ENCODE measurements at regions of chr11 and their contacts with region 1.

Region 1: GRCh38 chr11:14907411-14908213 is 15.6 kb upstream of the CYP2R1 start:
- DNase-seq: peak; percentile 72 to 93 (median 82)
- ATAC-seq: peak; percentile 57
- H3K4me3 ChIP-seq: no peak overlapping the region
- H3K4me3 Mint-ChIP-seq: peak overlapping the region; percentile 68
- H3K27ac ChIP-seq: no peak overlapping the region
- H3K27ac Mint-ChIP-seq: peak overlapping the region; percentile 43
- H3K4me1 ChIP-seq: peaks cover 32% of the 10 kb centered on the region
- H3K4me1 Mint-ChIP-seq: peaks cover 49% of the 10 kb centered on the region
- H3K27me3 ChIP-seq: no peaks in the 10 kb centered on the region
- H3K27me3 Mint-ChIP-seq: no peaks in the 10 kb centered on the region
- CTCF ChIP-seq: peak; percentile 86

Region 2: GRCh38 chr11:14300661-14301304 is 606.8 kb before region 1 on chr11:
- CTCF ChIA-PET with region 1: interaction called, 4 read pairs
- POLR2A ChIA-PET with region 1: no interaction called
- intact Hi-C with region 1: loop called (anchors 5 kb)
- DNase-seq: peak in 13 of 14 experiments; percentile 13 to 68 (median 27)
- ATAC-seq: peak; percentile 94
- H3K4me3 ChIP-seq: no peak overlapping the region
- H3K4me3 Mint-ChIP-seq: no peak overlapping the region
- H3K27ac ChIP-seq: no peak overlapping the region
- H3K27ac Mint-ChIP-seq: no peak overlapping the region
- H3K4me1 ChIP-seq: peaks cover 5% of the 10 kb centered on the region
- H3K4me1 Mint-ChIP-seq: peaks cover 5% of the 10 kb centered on the region
- H3K27me3 ChIP-seq: no peaks in the 10 kb centered on the region
- H3K27me3 Mint-ChIP-seq: no peaks in the 10 kb centered on the region
- CTCF ChIP-seq: peak; percentile 60

Region 3: DNA sequence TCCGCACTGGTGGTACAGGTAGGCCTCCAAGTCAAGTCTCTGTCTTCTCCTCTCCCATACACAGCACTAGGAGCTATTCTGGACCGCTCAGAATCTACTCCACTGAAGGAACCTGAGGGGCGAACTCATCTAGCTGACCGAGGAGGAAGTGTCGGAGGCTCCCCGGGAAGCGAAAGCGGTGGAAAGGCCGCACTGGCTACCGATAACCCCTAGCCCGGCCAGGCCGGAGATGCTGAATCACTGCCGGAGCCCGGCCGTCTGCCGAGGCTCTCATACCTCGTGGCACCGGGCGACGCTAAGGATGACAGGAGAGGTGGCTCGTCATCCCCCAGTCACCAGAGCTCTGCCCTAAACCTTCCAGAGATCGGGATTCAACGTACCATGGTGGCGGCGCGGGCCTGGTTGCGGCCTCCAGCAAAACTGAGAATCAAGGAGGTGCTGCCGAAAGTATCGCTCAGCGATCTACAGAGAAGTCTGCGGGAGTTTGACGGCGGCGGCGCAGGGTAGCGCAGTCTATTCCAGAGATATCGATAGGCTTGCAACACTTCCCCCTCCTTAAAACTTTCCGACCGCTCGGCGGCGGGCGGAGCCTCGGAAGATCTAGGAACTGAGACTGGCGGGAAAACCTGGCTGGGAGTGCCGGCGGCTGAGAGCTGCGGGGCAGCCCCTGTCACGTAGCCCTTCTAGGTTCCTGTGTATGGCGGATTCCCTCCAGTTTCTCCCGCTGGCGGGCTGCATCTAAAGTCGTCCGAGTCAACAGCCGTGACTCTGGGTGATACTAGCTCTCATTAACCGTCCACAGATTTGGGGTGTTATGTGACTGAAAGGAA is 387.5 kb before region 1 on chr11 and contains the start of gene PSMA1:
- CTCF ChIA-PET with region 1: interaction called, 8 read pairs
- POLR2A ChIA-PET with region 1: interaction called, 12 read pairs
- intact Hi-C with region 1: no loop called
- DNase-seq: peak; percentile 79 to 95 (median 87)
- ATAC-seq: peak; percentile 90
- H3K4me3 ChIP-seq: peak within 1 kb of the TSS; percentile 74
- H3K4me3 Mint-ChIP-seq: peak within 1 kb of the TSS; percentile 96
- H3K27ac ChIP-seq: peak within 1 kb of the TSS; percentile 81 to 83
- H3K27ac Mint-ChIP-seq: peak within 1 kb of the TSS; percentile 94
- H3K4me1 ChIP-seq: peaks cover 14% of the 10 kb centered on the region
- H3K4me1 Mint-ChIP-seq: peaks cover 37% of the 10 kb centered on the region
- H3K27me3 ChIP-seq: no peaks in the 10 kb centered on the region
- H3K27me3 Mint-ChIP-seq: no peaks in the 10 kb centered on the region
- CTCF ChIP-seq: peak; percentile 36
- total RNA-seq, gene PSMA1: 170 to 175 TPM

Region 4: DNA sequence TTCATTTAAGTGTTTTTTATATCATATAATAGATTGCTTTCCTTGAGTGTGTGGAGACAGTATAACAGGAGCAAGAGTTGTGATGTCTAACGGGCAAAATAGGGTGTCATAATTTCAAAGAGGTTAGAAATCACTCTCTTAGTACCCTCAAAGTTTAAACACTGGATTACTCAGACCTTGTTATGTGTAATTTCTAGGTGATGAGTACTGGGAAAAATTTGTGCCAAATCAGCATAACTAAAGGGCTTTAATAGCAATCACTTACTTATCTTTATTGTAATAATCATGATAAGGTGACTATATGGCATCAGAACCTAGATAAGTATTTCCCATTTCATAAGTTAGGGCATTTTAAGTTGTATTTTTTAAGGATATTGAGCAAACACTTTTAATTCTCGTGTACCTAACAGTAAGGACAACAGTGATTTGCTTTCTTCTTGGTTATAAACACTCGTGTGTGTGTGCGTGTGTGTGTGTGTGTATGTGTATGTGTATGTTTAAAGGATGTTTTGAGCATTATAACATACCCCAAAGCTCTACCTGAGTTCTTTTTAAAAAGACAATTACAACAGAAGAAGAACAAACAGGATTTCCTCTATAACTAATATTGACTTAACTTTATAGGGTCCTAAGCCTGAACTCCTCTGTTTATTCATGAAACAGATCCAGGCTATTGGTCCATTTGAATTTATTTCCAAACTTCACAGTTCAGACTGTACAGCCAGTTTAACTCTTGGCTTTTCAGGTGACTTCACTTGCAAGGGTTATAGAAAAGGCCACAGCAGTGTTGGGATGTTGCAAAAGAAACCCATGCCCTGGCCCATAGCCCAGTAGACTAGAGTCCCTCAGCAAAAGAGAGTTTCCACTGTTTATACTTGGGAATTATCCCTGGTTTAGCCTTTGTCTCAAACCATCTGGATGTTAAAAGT is 287.7 kb before region 1 on chr11:
- CTCF ChIA-PET with region 1: interaction called, 15 read pairs
- POLR2A ChIA-PET with region 1: no interaction called
- intact Hi-C with region 1: no loop called
- DNase-seq: no peak
- ATAC-seq: no peak
- H3K4me3 ChIP-seq: no peak overlapping the region
- H3K4me3 Mint-ChIP-seq: no peak overlapping the region
- H3K27ac ChIP-seq: no peak overlapping the region
- H3K27ac Mint-ChIP-seq: no peak overlapping the region
- H3K4me1 ChIP-seq: peaks cover 2% of the 10 kb centered on the region
- H3K4me1 Mint-ChIP-seq: peaks cover 78% of the 10 kb centered on the region
- H3K27me3 ChIP-seq: no peaks in the 10 kb centered on the region
- H3K27me3 Mint-ChIP-seq: no peaks in the 10 kb centered on the region
- CTCF ChIP-seq: no peak

Region 5: DNA sequence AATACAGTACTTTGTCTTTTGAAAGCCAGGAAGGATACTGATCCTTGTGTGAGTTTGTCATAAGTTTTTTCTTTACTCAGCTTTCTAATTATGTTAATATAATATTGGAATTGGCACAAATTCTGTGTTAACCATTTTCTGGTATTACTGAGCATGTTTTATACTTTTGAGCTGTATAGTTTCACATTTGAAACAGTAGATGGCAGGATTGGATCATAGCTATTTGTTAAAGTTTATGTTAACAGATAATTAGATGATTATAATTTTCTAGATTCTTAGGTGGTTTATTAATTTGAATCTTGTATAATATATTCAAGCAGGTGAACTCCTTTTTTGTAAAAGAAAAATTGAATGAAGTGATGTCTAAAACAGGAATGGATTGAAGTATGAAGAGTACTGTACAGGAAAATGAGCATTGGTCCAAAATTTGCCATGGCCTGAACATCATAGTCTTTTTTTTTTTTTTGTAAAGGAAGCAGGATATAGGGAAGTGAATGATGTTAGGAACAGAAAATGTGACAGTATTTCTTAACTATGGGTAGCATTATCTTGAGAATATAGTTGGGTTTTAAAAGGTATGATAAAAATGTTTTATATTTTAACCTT is 117.6 kb before region 1 on chr11:
- CTCF ChIA-PET with region 1: interaction called, 37 read pairs
- POLR2A ChIA-PET with region 1: interaction called, 4 read pairs
- intact Hi-C with region 1: loop called (anchors 1 kb)
- DNase-seq: peak in 3 of 14 experiments; percentile 43 to 47 (median 47)
- ATAC-seq: peak; percentile 57
- H3K4me3 ChIP-seq: no peak overlapping the region
- H3K4me3 Mint-ChIP-seq: no peak overlapping the region
- H3K27ac ChIP-seq: no peak overlapping the region
- H3K27ac Mint-ChIP-seq: peak overlapping the region; percentile 27
- H3K4me1 ChIP-seq: no peaks in the 10 kb centered on the region
- H3K4me1 Mint-ChIP-seq: peaks cover 25% of the 10 kb centered on the region
- H3K27me3 ChIP-seq: no peaks in the 10 kb centered on the region
- H3K27me3 Mint-ChIP-seq: no peaks in the 10 kb centered on the region
- CTCF ChIP-seq: peak; percentile 54

Region 6: GRCh38 chr11:15006139-15006759 is 98.6 kb after region 1 on chr11:
- CTCF ChIA-PET with region 1: interaction called, 13 read pairs
- POLR2A ChIA-PET with region 1: interaction called, 4 read pairs
- intact Hi-C with region 1: loop called (anchors 1 to 2 kb)
- DNase-seq: peak in 3 of 14 experiments; percentile 55 to 57 (median 57)
- ATAC-seq: peak; percentile 54
- H3K4me3 ChIP-seq: no peak overlapping the region
- H3K4me3 Mint-ChIP-seq: no peak overlapping the region
- H3K27ac ChIP-seq: no peak overlapping the region
- H3K27ac Mint-ChIP-seq: no peak overlapping the region
- H3K4me1 ChIP-seq: no peaks in the 10 kb centered on the region
- H3K4me1 Mint-ChIP-seq: no peaks in the 10 kb centered on the region
- H3K27me3 ChIP-seq: peaks cover 0 to 19% of the 10 kb centered on the region in 2 experiments
- H3K27me3 Mint-ChIP-seq: peaks cover 64% of the 10 kb centered on the region
- CTCF ChIP-seq: peak; percentile 63

Region 7: GRCh38 chr11:15208378-15209222 is 301.0 kb after region 1 on chr11:
- CTCF ChIA-PET with region 1: no interaction called
- POLR2A ChIA-PET with region 1: no interaction called
- intact Hi-C with region 1: loop called (anchors 1 kb)
- DNase-seq: peak; percentile 52 to 79 (median 66)
- ATAC-seq: peak; percentile 81
- H3K4me3 ChIP-seq: no peak overlapping the region
- H3K4me3 Mint-ChIP-seq: no peak overlapping the region
- H3K27ac ChIP-seq: no peak overlapping the region
- H3K27ac Mint-ChIP-seq: no peak overlapping the region
- H3K4me1 ChIP-seq: peaks cover 3% of the 10 kb centered on the region
- H3K4me1 Mint-ChIP-seq: no peaks in the 10 kb centered on the region
- H3K27me3 ChIP-seq: peaks cover 0 to 5% of the 10 kb centered on the region in 2 experiments
- H3K27me3 Mint-ChIP-seq: peaks cover 5% of the 10 kb centered on the region
- CTCF ChIP-seq: peak; percentile 74

Measured in CD4-positive, alpha-beta T cell (primary cell).